Heart right ventricle (tissue), 16 donors: ENCODE measurements at regions of chr17 and their contacts with region 1.

Region 1: DNA sequence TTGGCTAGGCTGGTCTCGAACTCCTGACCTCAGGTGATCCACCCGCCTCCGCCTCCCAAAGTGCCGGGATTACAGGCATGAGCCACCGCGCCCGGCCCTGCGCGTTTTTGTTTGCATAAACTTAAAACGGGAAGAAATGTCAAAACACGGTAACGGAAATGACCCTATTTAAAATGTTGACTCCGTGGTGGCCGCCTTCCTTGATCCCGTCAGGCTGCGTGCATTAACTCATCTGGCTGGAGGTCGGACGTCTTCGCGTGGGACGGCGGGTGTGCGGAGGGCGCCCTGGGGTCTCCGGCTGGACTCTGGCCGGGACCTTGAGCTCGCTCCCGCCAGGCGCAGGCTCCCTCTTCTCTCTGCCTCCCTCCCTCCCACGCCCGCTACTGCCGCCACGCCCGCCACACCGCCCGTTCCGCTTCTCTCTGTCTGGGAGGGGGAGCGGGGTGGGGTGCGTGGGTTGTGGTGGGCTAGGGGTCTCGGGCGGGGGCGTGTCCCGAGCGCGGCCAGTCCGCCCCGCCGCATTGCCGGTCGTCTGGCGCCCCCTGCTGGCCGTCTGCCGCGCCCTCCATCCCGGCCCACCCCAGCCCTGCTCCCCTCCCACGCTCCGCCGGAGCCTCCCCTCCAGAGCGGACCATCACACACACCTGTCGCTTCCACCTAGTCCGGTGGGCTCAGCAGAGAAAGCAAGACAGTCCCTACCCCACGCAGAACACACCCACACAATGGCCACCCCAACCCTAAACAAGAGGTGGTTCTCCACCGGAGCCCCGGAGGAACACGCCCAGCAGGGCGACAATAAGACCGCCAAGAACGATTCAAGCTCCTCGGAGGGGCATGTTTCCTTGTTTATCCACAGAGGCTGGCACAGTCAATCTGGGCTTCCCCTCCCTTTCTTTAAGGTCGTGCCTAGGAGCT is 1.2 kb upstream of the CCDC42 start:
- DNase-seq: peak; percentile 71 to 80
- ATAC-seq: peak; percentile 90 to 96 (median 94)
- H3K4me3 ChIP-seq: peak overlapping the region; percentile 54 to 91 (median 74)
- H3K27ac ChIP-seq: peak overlapping the region in 7 of 10 donors; percentile 39 to 88 (median 64)
- H3K4me1 ChIP-seq: peaks cover 0 to 14% (median 5%) of the 10 kb centered on the region in 9 donors
- H3K27me3 ChIP-seq: peaks cover 0 to 5% (median 0%) of the 10 kb centered on the region in 7 donors
- CTCF ChIP-seq: peak; percentile 92 to 99 (median 97)

Region 2: GRCh38 chr17:8470447-8471047 is 275.3 kb before region 1 on chr17:
- intact Hi-C with region 1: loop called in 1 of 10 experiments (anchors 10 kb)
- DNase-seq: peak; percentile 48 to 72
- ATAC-seq: peak; percentile 27 to 63 (median 54)
- H3K4me3 ChIP-seq: no peak overlapping the region
- H3K27ac ChIP-seq: peak overlapping the region in 6 of 10 donors; percentile 21 to 73 (median 46)
- H3K4me1 ChIP-seq: peaks cover 10 to 66% (median 31%) of the 10 kb centered on the region in 9 donors
- H3K27me3 ChIP-seq: no peaks in the 10 kb centered on the region
- CTCF ChIP-seq: no peak

Region 3: GRCh38 chr17:8630802-8631553 is 114.9 kb before region 1 on chr17:
- intact Hi-C with region 1: loop called in 2 of 10 experiments (anchors 5 to 10 kb)
- DNase-seq: peak; percentile 97 to 99
- ATAC-seq: peak; percentile 96 to 99 (median 98)
- H3K4me3 ChIP-seq: peak overlapping the region; percentile 75 to 98 (median 90)
- H3K27ac ChIP-seq: peak overlapping the region; percentile 79 to 94 (median 86)
- H3K4me1 ChIP-seq: peaks cover 5 to 48% (median 25%) of the 10 kb centered on the region in 9 donors
- H3K27me3 ChIP-seq: peaks cover 0 to 80% (median 0%) of the 10 kb centered on the region in 7 donors
- CTCF ChIP-seq: peak in 8 of 9 donors; percentile 5 to 42 (median 16)

Region 4: DNA sequence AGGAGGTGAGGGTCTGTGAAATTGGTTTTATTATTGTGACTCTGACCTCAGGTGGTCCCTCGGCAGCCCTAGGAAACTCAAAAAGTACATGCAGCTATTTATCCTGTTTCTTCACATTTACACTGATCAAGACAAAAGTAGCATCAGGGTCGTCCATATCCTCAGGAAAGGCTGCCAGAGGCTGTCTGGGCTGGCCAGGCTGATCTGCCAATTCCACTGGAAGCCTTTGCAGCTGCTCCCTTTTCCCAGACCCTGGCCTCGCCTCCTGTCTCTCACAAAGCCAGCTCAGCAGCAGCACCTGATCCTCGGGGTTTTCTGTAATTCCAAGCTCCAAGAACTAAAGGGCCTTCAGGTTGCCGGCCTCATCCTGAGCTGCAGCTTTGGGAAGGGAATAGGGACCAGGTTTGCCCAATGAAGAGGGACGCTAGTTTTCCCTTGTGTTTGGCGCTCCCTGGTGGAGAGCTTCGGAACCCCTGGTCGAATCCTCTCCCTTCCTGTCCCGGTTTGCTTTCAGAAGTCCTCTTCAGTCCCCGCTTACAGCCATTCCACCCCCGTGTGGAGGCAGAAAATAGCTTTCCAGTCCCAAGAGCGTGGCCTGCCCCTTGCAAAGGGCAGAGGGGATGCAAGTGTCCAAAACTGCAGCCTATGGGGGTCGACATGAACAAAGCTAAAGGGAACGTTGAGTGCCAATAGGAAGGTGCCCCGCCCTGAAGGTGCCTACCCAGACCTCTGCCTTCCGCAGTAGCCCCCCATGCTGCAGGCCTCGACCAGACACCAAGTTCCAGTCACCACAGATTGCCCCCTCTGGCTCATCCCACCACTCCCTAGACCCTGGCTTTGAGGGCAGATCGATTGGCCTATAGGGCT is 39.9 kb after region 1 on chr17:
- intact Hi-C with region 1: loop called in 1 of 10 experiments (anchors 5 kb)
- DNase-seq: peak; percentile 80 to 83
- ATAC-seq: peak; percentile 80 to 93 (median 89)
- H3K4me3 ChIP-seq: no peak overlapping the region
- H3K27ac ChIP-seq: no peak overlapping the region
- H3K4me1 ChIP-seq: peaks cover 0 to 20% (median 0%) of the 10 kb centered on the region in 9 donors
- H3K27me3 ChIP-seq: no peaks in the 10 kb centered on the region
- CTCF ChIP-seq: peak; percentile 48 to 94 (median 88)